CD4-positive, alpha-beta T cell (primary cell): ENCODE measurements at regions of chr2 and their contacts with region 1.

Region 1: DNA sequence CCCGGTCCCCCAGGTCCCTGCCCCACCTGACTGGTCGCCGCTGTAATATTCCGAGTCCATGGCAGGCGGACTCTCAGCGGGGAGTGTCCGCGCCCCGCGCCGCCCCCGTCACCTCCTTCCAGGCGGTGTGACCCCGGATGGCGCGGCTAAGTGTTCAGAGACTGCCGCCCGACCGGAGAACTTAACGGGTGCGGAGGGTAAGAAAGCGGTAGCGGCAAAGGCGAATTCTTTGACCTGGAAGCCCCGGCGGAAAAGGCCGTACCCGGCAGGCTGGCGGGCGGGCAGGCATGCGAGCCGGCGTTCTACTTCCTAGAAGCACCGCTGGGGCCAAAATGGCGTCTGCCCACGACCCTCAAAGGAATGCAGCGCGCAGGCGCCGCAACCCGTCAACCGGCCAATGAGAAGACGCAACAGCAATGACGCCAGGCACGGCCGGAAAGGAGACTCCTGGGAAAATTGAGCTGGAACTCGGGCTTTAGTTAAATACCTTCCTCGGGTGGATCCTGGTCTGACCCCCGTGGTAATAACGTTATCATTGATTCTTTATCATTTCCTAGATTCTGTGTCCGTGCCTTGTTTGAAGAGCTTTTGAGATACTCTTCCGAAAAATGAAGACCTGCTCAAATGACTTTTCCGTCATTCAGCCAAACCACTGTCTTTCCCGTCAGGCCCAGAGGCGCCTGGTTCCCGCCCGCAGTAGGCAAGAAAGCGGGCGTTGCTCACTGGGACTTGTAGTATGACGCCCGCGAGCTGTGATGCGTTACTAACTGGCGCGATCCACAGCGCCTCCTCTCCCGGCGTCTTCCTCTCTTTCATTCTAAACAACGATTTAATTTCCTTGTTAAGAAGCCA is at the start of gene IWS1:
- DNase-seq: peak; percentile 83 to 98 (median 89)
- ATAC-seq: peak; percentile 91
- H3K4me3 ChIP-seq: peak within 1 kb of the TSS; percentile 91
- H3K4me3 Mint-ChIP-seq: peak within 1 kb of the TSS; percentile 96
- H3K27ac ChIP-seq: peak within 1 kb of the TSS; percentile 90 to 95
- H3K27ac Mint-ChIP-seq: peak within 1 kb of the TSS; percentile 99
- H3K4me1 ChIP-seq: peaks cover 31% of the 10 kb centered on the region
- H3K4me1 Mint-ChIP-seq: peaks cover 40% of the 10 kb centered on the region
- H3K27me3 ChIP-seq: no peaks in the 10 kb centered on the region
- H3K27me3 Mint-ChIP-seq: no peaks in the 10 kb centered on the region
- CTCF ChIP-seq: no peak
- total RNA-seq, gene IWS1: 24.9 to 26.0 TPM

Region 2: DNA sequence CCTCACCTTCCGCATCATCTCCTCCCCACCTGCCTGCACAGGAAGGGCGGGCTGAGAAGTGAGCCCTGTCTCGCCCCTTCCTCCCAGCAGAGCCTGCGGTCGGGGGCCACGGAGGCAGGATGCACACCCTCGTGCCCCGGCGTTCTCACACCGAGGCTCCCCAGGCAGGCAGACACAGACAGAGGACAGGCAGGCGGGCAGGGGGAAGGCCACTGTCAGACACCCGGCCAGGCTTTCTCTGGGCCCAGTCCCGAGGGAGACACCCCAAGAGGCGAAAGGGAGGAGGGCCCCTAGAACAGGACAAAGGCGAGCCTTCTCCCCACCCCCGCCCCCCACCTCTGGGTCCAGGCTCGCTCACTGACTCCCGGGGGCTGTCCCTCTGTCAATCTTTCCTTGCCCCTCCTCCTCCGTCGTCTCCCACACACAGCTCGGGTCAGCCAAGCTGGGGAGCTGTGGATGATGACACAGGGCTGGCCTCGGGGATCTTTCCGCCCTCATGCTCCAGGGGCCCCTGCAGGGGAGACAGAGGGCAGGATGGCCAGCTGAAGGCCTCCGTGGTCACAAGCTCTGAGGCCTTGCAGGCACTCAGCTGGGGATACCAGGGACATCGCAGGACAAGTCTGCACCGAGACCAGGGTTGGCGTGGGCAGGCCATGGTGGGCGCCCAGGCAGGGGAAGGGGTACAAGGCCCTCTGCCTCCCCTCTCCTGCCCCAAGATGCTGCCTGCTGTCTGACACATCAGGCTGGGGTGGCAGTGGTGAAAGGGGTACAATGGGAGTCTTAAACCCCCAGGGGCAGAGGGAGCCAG is 444.3 kb before region 1 on chr2:
- CTCF ChIA-PET with region 1: no interaction called
- POLR2A ChIA-PET with region 1: interaction called, 7 read pairs
- intact Hi-C with region 1: loop called in 1 of 2 experiments (anchors 5 kb)
- DNase-seq: peak; percentile 69 to 92 (median 81)
- ATAC-seq: peak; percentile 73
- H3K4me3 ChIP-seq: peak overlapping the region; percentile 85
- H3K4me3 Mint-ChIP-seq: peak overlapping the region; percentile 95
- H3K27ac ChIP-seq: peak overlapping the region; percentile 83 to 93
- H3K27ac Mint-ChIP-seq: peak overlapping the region; percentile 99
- H3K4me1 ChIP-seq: peaks cover 94% of the 10 kb centered on the region
- H3K4me1 Mint-ChIP-seq: peaks cover 86% of the 10 kb centered on the region
- H3K27me3 ChIP-seq: no peaks in the 10 kb centered on the region
- H3K27me3 Mint-ChIP-seq: no peaks in the 10 kb centered on the region
- CTCF ChIP-seq: no peak

Region 3: GRCh38 chr2:127387655-127388422 is 138.5 kb before region 1 on chr2 and contains the start of gene MAP3K2:
- CTCF ChIA-PET with region 1: no interaction called
- POLR2A ChIA-PET with region 1: interaction called, 5 read pairs
- intact Hi-C with region 1: loop called (anchors 1 to 2 kb)
- DNase-seq: peak; percentile 87 to 99 (median 96)
- ATAC-seq: peak; percentile 69
- H3K4me3 ChIP-seq: peak within 1 kb of the TSS; percentile 82
- H3K4me3 Mint-ChIP-seq: peak within 1 kb of the TSS; percentile 98
- H3K27ac ChIP-seq: peak within 1 kb of the TSS; percentile 99 to 100
- H3K27ac Mint-ChIP-seq: peak within 1 kb of the TSS; percentile 100
- H3K4me1 ChIP-seq: peaks cover 33% of the 10 kb centered on the region
- H3K4me1 Mint-ChIP-seq: peaks cover 69% of the 10 kb centered on the region
- H3K27me3 ChIP-seq: no peaks in the 10 kb centered on the region
- H3K27me3 Mint-ChIP-seq: no peaks in the 10 kb centered on the region
- CTCF ChIP-seq: no peak
- total RNA-seq, gene MAP3K2: 103 to 105 TPM

Region 4: GRCh38 chr2:127810619-127811396 is 284.4 kb after region 1 on chr2 and contains the start of gene WDR33:
- CTCF ChIA-PET with region 1: no interaction called
- POLR2A ChIA-PET with region 1: interaction called, 3 read pairs
- intact Hi-C with region 1: loop called (anchors 5 kb)
- DNase-seq: peak; percentile 89 to 98 (median 93)
- ATAC-seq: peak; percentile 96
- H3K4me3 ChIP-seq: peak within 1 kb of the TSS; percentile 83
- H3K4me3 Mint-ChIP-seq: peak within 1 kb of the TSS; percentile 97
- H3K27ac ChIP-seq: peak within 1 kb of the TSS; percentile 95 to 97
- H3K27ac Mint-ChIP-seq: peak within 1 kb of the TSS; percentile 99
- H3K4me1 ChIP-seq: peaks cover 36% of the 10 kb centered on the region
- H3K4me1 Mint-ChIP-seq: peaks cover 54% of the 10 kb centered on the region
- H3K27me3 ChIP-seq: no peaks in the 10 kb centered on the region
- H3K27me3 Mint-ChIP-seq: no peaks in the 10 kb centered on the region
- CTCF ChIP-seq: no peak
- total RNA-seq, gene WDR33: 59.8 to 61.5 TPM

Region 5: GRCh38 chr2:127891811-127892210 is 365.4 kb after region 1 on chr2:
- CTCF ChIA-PET with region 1: no interaction called
- POLR2A ChIA-PET with region 1: no interaction called
- intact Hi-C with region 1: loop called in 1 of 2 experiments (anchors 5 kb)
- DNase-seq: no peak
- ATAC-seq: no peak
- H3K4me3 ChIP-seq: no peak overlapping the region
- H3K4me3 Mint-ChIP-seq: no peak overlapping the region
- H3K27ac ChIP-seq: no peak overlapping the region
- H3K27ac Mint-ChIP-seq: no peak overlapping the region
- H3K4me1 ChIP-seq: peaks cover 7% of the 10 kb centered on the region
- H3K4me1 Mint-ChIP-seq: peaks cover 30% of the 10 kb centered on the region
- H3K27me3 ChIP-seq: no peaks in the 10 kb centered on the region
- H3K27me3 Mint-ChIP-seq: no peaks in the 10 kb centered on the region
- CTCF ChIP-seq: no peak

Region 6: GRCh38 chr2:128090945-128091725 is 564.8 kb after region 1 on chr2 and contains the start of gene UGGT1:
- CTCF ChIA-PET with region 1: no interaction called
- POLR2A ChIA-PET with region 1: interaction called, 6 read pairs
- intact Hi-C with region 1: loop called (anchors 5 kb)
- DNase-seq: peak; percentile 88 to 98 (median 91)
- ATAC-seq: peak; percentile 96
- H3K4me3 ChIP-seq: peak within 1 kb of the TSS; percentile 89
- H3K4me3 Mint-ChIP-seq: peak within 1 kb of the TSS; percentile 98
- H3K27ac ChIP-seq: peak within 1 kb of the TSS; percentile 75 to 82
- H3K27ac Mint-ChIP-seq: peak within 1 kb of the TSS; percentile 97
- H3K4me1 ChIP-seq: peaks cover 26% of the 10 kb centered on the region
- H3K4me1 Mint-ChIP-seq: peaks cover 53% of the 10 kb centered on the region
- H3K27me3 ChIP-seq: no peaks in the 10 kb centered on the region
- H3K27me3 Mint-ChIP-seq: no peaks in the 10 kb centered on the region
- CTCF ChIP-seq: no peak
- total RNA-seq, gene UGGT1: 23.5 to 28.4 TPM